ENCODE measurements at regions of chr1 and their contacts with region 1.

Region 1: DNA sequence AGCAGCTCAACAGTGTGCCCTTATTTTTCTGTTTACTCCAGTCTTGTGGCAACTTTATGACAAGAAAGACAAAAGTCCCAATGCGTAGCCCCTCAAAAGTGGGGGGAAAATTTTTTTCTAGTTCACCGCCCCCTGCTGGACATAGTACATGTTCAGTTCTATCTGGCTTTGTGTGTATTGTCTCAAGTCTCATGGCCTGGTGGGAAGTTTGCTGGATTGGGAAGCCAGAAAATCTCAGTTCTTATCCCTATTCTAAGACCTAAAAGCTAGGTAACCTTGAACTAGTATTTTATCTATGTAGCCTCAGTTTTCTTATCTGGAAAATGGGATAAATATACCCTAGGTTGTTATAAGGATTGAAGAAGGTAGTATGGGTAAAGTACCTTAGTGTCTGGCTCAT is 55.8 kb upstream of the LDLRAP1 start:
- DNase-seq: no peak
- H3K4me3 ChIP-seq: no peak overlapping the region
- H3K27ac ChIP-seq: no peak overlapping the region
- H3K27me3 ChIP-seq: no peaks in the 10 kb centered on the region
- CTCF ChIP-seq: peak; percentile 46

Region 2: GRCh38 chr1:25217598-25218232 is 269.9 kb before region 1 on chr1:
- CTCF ChIA-PET with region 1: no interaction called
- POLR2A ChIA-PET with region 1: no interaction called
- DNase-seq: no peak
- H3K4me3 ChIP-seq: no peak overlapping the region
- H3K27ac ChIP-seq: no peak overlapping the region
- H3K27me3 ChIP-seq: no peaks in the 10 kb centered on the region
- CTCF ChIP-seq: no peak

Region 3: GRCh38 chr1:25476186-25477097 is 11.2 kb before region 1 on chr1:
- CTCF ChIA-PET with region 1: interaction called, 15 read pairs
- POLR2A ChIA-PET with region 1: no interaction called
- DNase-seq: no peak
- H3K4me3 ChIP-seq: no peak overlapping the region
- H3K27ac ChIP-seq: no peak overlapping the region
- H3K27me3 ChIP-seq: no peaks in the 10 kb centered on the region
- CTCF ChIP-seq: no peak

Region 4: GRCh38 chr1:25503551-25504426 is 16.2 kb after region 1 on chr1:
- CTCF ChIA-PET with region 1: interaction called, 13 read pairs
- POLR2A ChIA-PET with region 1: no interaction called
- DNase-seq: no peak
- H3K4me3 ChIP-seq: no peak overlapping the region
- H3K27ac ChIP-seq: peak overlapping the region; percentile 11
- H3K27me3 ChIP-seq: no peaks in the 10 kb centered on the region
- CTCF ChIP-seq: peak; percentile 32; the same call in 1 of the 2 replicates